ENCODE measurements at regions of chr6 and their contacts with region 1.

Region 1: DNA sequence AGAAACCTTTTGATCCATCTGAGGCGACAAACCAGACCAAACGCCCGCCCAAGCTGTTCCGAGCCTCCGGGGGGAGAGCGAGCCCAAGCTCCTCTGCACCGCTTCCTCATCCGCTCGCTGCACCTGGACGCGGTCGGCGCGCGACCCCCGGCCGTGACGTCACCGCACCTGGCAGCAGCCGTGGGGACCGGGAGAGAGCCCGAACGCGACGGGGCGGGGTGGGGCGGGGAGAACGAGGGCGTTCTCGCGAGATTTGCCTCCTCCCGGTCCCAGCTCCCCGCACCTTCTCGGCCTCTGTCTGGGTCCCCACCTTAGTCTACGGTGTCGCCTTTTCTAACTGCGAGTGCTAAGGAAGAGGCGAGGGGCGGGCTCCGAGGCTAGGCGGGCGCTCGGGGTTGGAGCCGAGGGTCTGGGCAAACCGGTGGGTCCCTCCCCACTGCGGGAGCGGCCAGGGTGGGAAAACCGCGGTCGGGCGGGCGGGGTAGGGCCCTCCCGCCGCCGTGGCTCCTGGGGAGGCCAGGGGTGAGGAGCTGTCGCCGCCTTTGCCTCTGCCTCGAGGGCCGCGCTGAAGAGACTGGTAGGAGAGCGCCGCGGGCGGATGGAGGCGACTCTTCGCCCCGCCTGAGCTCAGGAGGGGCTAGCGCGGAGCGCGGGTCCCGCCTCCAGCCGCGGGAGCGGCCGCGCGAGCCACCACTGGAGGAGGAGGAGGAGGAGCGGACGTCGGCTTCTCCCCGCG is at the start of gene CD2AP:
- DNase-seq: peak; percentile 88
- H3K4me3 Mint-ChIP-seq: peak within 1 kb of the TSS; percentile 87
- H3K27ac Mint-ChIP-seq: peak within 1 kb of the TSS; percentile 93
- H3K4me1 Mint-ChIP-seq: peaks cover 25% of the 10 kb centered on the region
- H3K27me3 Mint-ChIP-seq: no peaks in the 10 kb centered on the region
- CTCF ChIP-seq: no peak
- total RNA-seq, gene CD2AP: 35.7 and 40.3 TPM in 2 replicates

Region 2: GRCh38 chr6:47413752-47414422 is 63.8 kb before region 1 on chr6:
- CTCF ChIA-PET with region 1: interaction called, 41 read pairs
- POLR2A ChIA-PET with region 1: interaction called, 29 read pairs
- intact Hi-C with region 1: loop called (anchors 2 kb)
- DNase-seq: peak; percentile 81
- H3K4me3 Mint-ChIP-seq: peak overlapping the region; percentile 68
- H3K27ac Mint-ChIP-seq: peak overlapping the region; percentile 94
- H3K4me1 Mint-ChIP-seq: peaks cover 18% of the 10 kb centered on the region
- H3K27me3 Mint-ChIP-seq: no peaks in the 10 kb centered on the region
- CTCF ChIP-seq: peak; percentile 75

Region 3: DNA sequence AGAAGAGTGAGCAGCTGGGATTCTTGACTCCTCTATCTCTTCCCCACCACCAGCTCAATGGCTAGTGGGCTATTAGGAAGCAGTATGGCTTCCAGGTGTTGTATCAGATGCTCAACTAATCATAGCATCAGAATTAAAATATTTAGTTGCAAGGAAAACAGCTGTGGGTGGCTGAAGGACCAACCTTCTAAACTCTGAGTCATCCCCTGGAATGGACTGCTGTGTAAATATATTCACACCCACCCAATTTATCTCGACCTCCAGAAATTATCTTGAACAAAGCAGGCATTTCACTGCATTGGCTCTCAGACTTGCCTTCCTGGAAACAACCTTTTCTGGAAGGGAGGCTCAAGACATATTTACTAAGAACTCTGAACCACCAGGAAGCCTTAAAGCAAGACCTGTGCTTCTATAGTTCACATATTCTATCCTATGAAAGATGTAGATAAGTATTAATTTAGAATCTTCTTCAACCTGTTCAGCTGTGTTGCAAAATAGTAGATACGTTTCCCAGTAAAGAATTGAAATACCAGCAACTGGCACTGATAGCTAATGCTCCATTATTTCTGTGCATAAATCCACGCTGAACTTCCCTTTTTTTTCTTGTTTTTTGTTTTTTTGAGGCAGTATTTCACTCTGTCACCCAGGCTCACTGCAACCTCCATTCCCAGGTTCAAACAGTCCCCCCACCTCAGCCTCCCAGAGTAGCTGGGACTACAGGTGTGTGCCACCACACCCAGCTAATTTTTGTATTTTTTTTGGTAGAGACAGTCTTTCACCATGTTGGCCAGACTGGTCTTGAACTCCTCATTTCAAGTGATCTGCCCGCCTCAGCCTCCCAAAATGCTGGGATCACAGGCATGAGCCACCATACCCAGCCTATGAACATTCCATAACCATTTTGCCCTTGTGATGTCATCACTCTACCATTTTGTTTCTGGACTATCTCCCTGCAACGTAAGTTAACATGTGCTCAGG is 57.0 kb before region 1 on chr6:
- CTCF ChIA-PET with region 1: no interaction called
- POLR2A ChIA-PET with region 1: interaction called, 29 read pairs
- intact Hi-C with region 1: loop called (anchors 2 kb)
- DNase-seq: peak; percentile 11
- H3K4me3 Mint-ChIP-seq: no peak overlapping the region
- H3K27ac Mint-ChIP-seq: no peak overlapping the region
- H3K4me1 Mint-ChIP-seq: no peaks in the 10 kb centered on the region
- H3K27me3 Mint-ChIP-seq: no peaks in the 10 kb centered on the region
- CTCF ChIP-seq: no peak

Region 4: DNA sequence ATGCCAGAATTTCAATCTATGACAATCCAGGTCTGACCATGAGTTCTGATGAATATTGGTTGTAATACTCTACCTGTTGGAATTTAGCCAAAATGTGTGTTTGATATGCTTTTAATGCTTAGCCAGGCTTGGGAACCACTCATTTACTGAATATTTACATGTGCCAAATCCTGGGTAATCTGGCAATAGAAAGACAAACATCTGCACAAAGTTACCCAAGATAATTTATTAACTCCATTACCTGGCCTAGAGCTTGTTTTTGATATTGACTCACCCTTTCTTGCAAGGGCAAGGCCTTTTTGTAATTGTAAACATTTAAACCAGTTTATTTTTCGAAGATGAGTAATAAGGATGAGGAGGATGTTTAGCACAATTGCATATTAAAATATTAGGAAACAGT is 13.6 kb before region 1 on chr6:
- CTCF ChIA-PET with region 1: interaction called, 3 read pairs
- POLR2A ChIA-PET with region 1: interaction called, 54 read pairs
- intact Hi-C with region 1: no loop called
- DNase-seq: peak; percentile 36
- H3K4me3 Mint-ChIP-seq: no peak overlapping the region
- H3K27ac Mint-ChIP-seq: no peak overlapping the region
- H3K4me1 Mint-ChIP-seq: no peaks in the 10 kb centered on the region
- H3K27me3 Mint-ChIP-seq: no peaks in the 10 kb centered on the region
- CTCF ChIP-seq: no peak

Region 5: GRCh38 chr6:47836046-47836445 is 358.4 kb after region 1 on chr6:
- CTCF ChIA-PET with region 1: no interaction called
- POLR2A ChIA-PET with region 1: no interaction called
- intact Hi-C with region 1: no loop called
- DNase-seq: no peak
- H3K4me3 Mint-ChIP-seq: no peak overlapping the region
- H3K27ac Mint-ChIP-seq: no peak overlapping the region
- H3K4me1 Mint-ChIP-seq: no peaks in the 10 kb centered on the region
- H3K27me3 Mint-ChIP-seq: no peaks in the 10 kb centered on the region
- CTCF ChIP-seq: no peak